ENCODE measurements at regions of chr13 and their contacts with region 1.

Region 1: GRCh38 chr13:49641801-49642291 is 13.5 kb downstream of the ARL11 start:
- DNase-seq: peak; percentile 69 to 87 (median 83)
- H3K4me3 ChIP-seq: peak overlapping the region in 2 of 7 experiments; percentile 35 to 51
- H3K27ac ChIP-seq: no peak overlapping the region
- H3K4me1 ChIP-seq: peaks cover 9 to 33% (median 23%) of the 10 kb centered on the region in 4 experiments
- H3K27me3 ChIP-seq: no peaks in the 10 kb centered on the region

Region 2: GRCh38 chr13:49627831-49628652 is 13.8 kb before region 1 on chr13 and contains the start of gene ARL11:
- CTCF ChIA-PET with region 1: interaction called, 29 read pairs
- POLR2A ChIA-PET with region 1: no interaction called
- DNase-seq: peak; percentile 79 to 94 (median 92)
- H3K4me3 ChIP-seq: peak within 1 kb of the TSS; percentile 5 to 88 (median 78)
- H3K27ac ChIP-seq: peak within 1 kb of the TSS; percentile 54 to 73
- H3K4me1 ChIP-seq: peaks cover 7 to 33% (median 19%) of the 10 kb centered on the region in 4 experiments
- H3K27me3 ChIP-seq: no peaks in the 10 kb centered on the region

Measured in common myeloid progenitor, CD34-positive (primary cell).